ENCODE measurements at regions of chr21 and their contacts with region 1.

Region 1: DNA sequence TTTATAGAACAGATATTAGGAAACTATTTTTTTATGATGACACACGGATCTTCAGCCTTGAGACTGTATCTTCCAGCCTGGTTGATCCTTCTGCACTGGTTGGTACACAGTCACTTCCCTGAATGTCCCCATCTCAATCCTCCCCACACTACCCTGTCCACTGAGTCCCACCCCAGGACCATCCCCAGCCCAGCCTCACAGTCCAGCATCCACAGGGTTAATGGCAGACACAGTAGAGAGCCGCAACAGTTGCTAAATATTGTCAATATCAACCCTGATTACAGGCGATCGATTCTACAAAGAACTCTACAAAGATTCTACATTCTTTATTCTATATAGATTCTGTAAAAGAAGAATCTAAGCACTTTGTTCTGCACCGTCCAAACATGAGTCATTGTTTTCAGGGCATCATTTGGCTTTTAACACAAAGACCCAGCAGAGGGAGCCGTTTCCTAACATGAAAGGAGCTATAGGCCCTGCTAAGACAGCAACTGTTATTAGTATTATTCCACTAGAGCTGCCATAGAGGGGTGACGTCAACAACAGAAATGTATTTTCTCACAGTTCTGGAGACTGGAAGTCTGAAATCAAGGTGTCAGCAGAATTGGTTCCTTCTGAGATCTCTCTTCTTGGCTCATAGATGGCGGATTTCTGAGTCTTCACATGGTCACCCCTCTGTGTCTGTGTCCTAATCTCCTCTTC is 30.1 kb upstream of the IFNAR2 start:
- DNase-seq: peak; percentile 73
- ATAC-seq: peak; percentile 76
- H3K4me3 ChIP-seq: no peak overlapping the region
- H3K27ac ChIP-seq: no peak overlapping the region
- H3K4me1 ChIP-seq: peaks cover 14% of the 10 kb centered on the region
- H3K27me3 ChIP-seq: no peaks in the 10 kb centered on the region; a peak in 1 of 4 replicates
- CTCF ChIP-seq: peak; percentile 74 to 90 (median 75)
- EP300 ChIP-seq: no peak
- POLR2A ChIP-seq: no peak
- RAD21 ChIP-seq: peak; percentile 96

Region 2: DNA sequence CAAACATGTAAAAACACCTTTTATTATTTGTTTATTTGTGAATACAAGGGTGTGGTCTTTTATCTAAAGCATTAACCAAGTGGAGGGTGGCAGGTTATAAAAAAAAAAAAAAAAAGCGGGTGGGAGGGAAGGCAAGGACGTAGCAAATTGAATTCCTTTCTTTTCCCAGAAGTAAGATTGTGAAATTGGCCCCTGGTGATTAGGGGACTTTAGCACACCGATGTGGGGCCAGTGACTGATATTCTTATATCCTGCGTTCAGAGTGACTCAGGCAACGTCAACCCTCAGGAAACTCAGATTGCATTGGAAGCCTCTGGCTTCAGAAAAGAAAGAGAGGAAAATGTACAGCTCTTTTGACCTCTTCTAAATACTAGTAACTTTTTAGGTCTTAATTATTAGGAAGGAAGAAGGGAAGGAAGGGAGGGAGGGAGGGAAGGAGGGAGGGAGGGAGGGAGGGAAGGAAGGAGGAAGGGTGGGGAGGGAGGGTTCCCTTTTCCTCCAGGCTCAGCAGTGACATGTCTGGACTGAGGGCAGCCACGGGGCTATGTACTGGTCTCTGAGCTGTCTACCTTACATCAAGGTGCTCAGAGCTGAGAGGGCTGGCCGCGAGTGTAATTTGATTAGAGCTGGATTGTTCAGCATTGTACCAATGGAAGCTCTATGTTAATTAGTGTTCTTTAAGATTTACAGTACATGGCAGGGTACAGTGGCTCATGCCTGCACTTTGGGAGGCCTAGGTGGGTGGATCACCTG is 756.9 kb before region 1 on chr21:
- CTCF ChIA-PET with region 1: no interaction called
- POLR2A ChIA-PET with region 1: no interaction called
- RAD21 ChIA-PET with region 1: no interaction called
- SMC1A ChIA-PET with region 1: no interaction called
- in situ Hi-C with region 1: no loop called
- intact Hi-C with region 1: no loop called
- DNase-seq: no peak
- ATAC-seq: no peak
- H3K4me3 ChIP-seq: no peak overlapping the region
- H3K27ac ChIP-seq: no peak overlapping the region
- H3K4me1 ChIP-seq: no peaks in the 10 kb centered on the region
- H3K27me3 ChIP-seq: no peaks in the 10 kb centered on the region; a peak in 1 of 4 replicates
- CTCF ChIP-seq: no peak
- EP300 ChIP-seq: no peak
- POLR2A ChIP-seq: no peak
- RAD21 ChIP-seq: no peak

Region 3: GRCh38 chr21:32940079-32941014 is 259.3 kb before region 1 on chr21:
- CTCF ChIA-PET with region 1: interaction called, 43 read pairs
- POLR2A ChIA-PET with region 1: no interaction called
- RAD21 ChIA-PET with region 1: interaction called, 15 read pairs
- SMC1A ChIA-PET with region 1: interaction called, 21 read pairs
- in situ Hi-C with region 1: no loop called
- intact Hi-C with region 1: loop called (anchors 2 kb)
- DNase-seq: no peak
- ATAC-seq: peak; percentile 76
- H3K4me3 ChIP-seq: no peak overlapping the region
- H3K27ac ChIP-seq: no peak overlapping the region
- H3K4me1 ChIP-seq: no peaks in the 10 kb centered on the region
- H3K27me3 ChIP-seq: no peaks in the 10 kb centered on the region
- CTCF ChIP-seq: peak; percentile 60 to 78 (median 67)
- EP300 ChIP-seq: no peak
- POLR2A ChIP-seq: no peak
- RAD21 ChIP-seq: peak; percentile 64

Region 4: GRCh38 chr21:33127154-33127893 is 72.3 kb before region 1 on chr21:
- CTCF ChIA-PET with region 1: interaction called, 24 read pairs
- POLR2A ChIA-PET with region 1: interaction called, 3 read pairs
- RAD21 ChIA-PET with region 1: interaction called, 5 read pairs
- SMC1A ChIA-PET with region 1: interaction called, 9 read pairs
- in situ Hi-C with region 1: no loop called
- intact Hi-C with region 1: loop called (anchors 5 kb)
- DNase-seq: peak; percentile 19
- ATAC-seq: peak; percentile 93
- H3K4me3 ChIP-seq: peak overlapping the region; percentile 38; the same call in 1 of the 2 replicates
- H3K27ac ChIP-seq: no peak overlapping the region
- H3K4me1 ChIP-seq: no peaks in the 10 kb centered on the region
- H3K27me3 ChIP-seq: peaks cover 2% of the 10 kb centered on the region in 2 experiments; a peak in 3 of 4 replicates
- CTCF ChIP-seq: peak; percentile 76 to 89 (median 82)
- EP300 ChIP-seq: no peak
- POLR2A ChIP-seq: no peak
- RAD21 ChIP-seq: peak; percentile 86

Region 5: GRCh38 chr21:33339918-33340317 is 140.3 kb after region 1 on chr21:
- CTCF ChIA-PET with region 1: interaction called, 21 read pairs
- POLR2A ChIA-PET with region 1: no interaction called
- RAD21 ChIA-PET with region 1: no interaction called
- SMC1A ChIA-PET with region 1: interaction called, 5 read pairs
- in situ Hi-C with region 1: no loop called
- intact Hi-C with region 1: no loop called
- DNase-seq: no peak
- ATAC-seq: peak; percentile 31; the same call in 2 of the 3 replicates
- H3K4me3 ChIP-seq: no peak overlapping the region
- H3K27ac ChIP-seq: peak overlapping the region; percentile 61
- H3K4me1 ChIP-seq: peaks cover 21% of the 10 kb centered on the region
- H3K27me3 ChIP-seq: no peaks in the 10 kb centered on the region
- CTCF ChIP-seq: no peak
- EP300 ChIP-seq: no peak
- POLR2A ChIP-seq: no peak
- RAD21 ChIP-seq: no peak

Region 6: DNA sequence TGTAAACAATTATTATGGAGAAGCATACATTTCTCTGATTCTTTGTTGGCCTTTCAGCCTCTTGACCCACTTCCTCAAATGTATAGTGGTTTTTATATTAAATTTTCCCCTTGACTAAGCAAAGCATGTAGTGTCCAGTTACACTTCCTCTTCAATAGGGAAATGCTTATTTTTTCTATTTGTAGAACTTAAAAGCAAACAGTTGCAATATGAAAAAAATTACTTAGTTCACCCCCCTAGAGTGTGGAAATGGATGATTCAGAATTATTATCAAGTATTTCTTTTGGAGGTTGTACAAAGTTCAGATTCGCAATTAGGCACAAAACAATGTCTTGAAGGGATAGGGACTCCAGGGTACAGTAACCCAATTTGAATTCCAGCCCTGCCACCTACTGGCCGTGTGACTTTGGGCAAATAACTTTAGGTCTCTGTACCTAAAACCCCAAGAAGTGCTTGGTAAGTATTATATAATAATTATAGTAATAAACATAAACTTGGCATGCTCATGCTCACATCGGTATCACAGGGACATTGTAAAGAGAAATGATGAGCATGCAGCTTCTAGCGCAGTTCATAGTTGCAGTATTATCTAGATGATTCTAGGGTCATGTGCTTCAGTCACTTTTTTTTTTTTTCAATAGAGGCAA is 174.9 kb after region 1 on chr21:
- CTCF ChIA-PET with region 1: interaction called, 25 read pairs
- POLR2A ChIA-PET with region 1: interaction called, 3 read pairs
- RAD21 ChIA-PET with region 1: interaction called, 12 read pairs
- SMC1A ChIA-PET with region 1: interaction called, 7 read pairs
- in situ Hi-C with region 1: no loop called
- intact Hi-C with region 1: loop called (anchors 1 kb)
- DNase-seq: no peak
- ATAC-seq: peak; percentile 87
- H3K4me3 ChIP-seq: no peak overlapping the region
- H3K27ac ChIP-seq: no peak overlapping the region
- H3K4me1 ChIP-seq: peaks cover 17% of the 10 kb centered on the region
- H3K27me3 ChIP-seq: no peaks in the 10 kb centered on the region
- CTCF ChIP-seq: peak; percentile 62 to 74 (median 63)
- EP300 ChIP-seq: peak in 1 of 2 experiments; percentile 27; a peak in 1 of 4 replicates
- POLR2A ChIP-seq: no peak
- RAD21 ChIP-seq: peak; percentile 77

Region 7: DNA sequence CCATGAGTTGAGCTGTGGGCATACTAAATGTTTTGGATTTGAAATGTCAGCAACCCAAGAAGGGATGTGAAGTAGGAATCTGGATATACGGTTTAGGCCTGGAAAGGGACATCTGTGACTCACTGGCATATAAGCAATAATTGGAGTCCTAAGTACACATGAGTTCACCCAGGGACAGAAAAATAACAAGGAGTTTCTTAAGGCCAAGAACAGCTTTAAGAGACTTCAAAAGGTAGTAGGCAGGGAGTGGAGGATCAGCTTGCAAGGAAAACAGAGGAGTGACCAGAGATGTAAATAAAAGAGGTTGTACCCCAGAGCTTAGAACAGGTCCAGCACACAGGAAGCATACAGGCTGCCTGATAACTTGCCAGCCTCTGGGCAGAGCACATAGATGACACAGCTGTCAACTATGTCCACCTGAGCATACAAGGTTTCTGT is 252.0 kb after region 1 on chr21:
- CTCF ChIA-PET with region 1: interaction called, 319 read pairs
- POLR2A ChIA-PET with region 1: no interaction called
- RAD21 ChIA-PET with region 1: interaction called, 37 read pairs
- SMC1A ChIA-PET with region 1: interaction called, 62 read pairs
- in situ Hi-C with region 1: no loop called
- intact Hi-C with region 1: no loop called
- DNase-seq: no peak
- ATAC-seq: no peak
- H3K4me3 ChIP-seq: no peak overlapping the region
- H3K27ac ChIP-seq: no peak overlapping the region
- H3K4me1 ChIP-seq: no peaks in the 10 kb centered on the region
- H3K27me3 ChIP-seq: no peaks in the 10 kb centered on the region
- CTCF ChIP-seq: no peak
- EP300 ChIP-seq: no peak
- POLR2A ChIP-seq: no peak
- RAD21 ChIP-seq: no peak

Region 8: DNA sequence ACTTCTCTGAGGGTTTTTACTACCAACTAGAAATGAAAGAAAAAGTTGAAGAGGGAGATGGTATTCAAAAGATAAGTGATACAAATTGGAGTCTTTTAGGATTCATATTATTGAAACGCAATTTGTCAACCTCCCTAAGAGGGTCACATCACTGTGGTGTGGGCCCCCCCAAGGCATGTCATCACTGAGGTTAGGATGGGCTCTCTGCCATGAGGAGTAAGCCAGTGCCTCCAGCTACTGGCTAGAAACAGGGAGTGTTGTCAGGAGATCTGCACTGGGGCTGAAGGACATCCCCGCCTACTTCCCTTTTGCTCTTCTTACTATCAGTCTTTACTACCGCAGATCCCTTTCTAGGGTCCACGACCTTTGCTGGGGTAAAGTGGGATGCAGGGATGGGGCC is 468.5 kb after region 1 on chr21:
- CTCF ChIA-PET with region 1: no interaction called
- POLR2A ChIA-PET with region 1: no interaction called
- RAD21 ChIA-PET with region 1: no interaction called
- SMC1A ChIA-PET with region 1: no interaction called
- in situ Hi-C with region 1: no loop called
- intact Hi-C with region 1: no loop called
- DNase-seq: no peak
- ATAC-seq: no peak
- H3K4me3 ChIP-seq: no peak overlapping the region
- H3K27ac ChIP-seq: no peak overlapping the region
- H3K4me1 ChIP-seq: no peaks in the 10 kb centered on the region
- H3K27me3 ChIP-seq: no peaks in the 10 kb centered on the region
- CTCF ChIP-seq: no peak
- EP300 ChIP-seq: no peak
- POLR2A ChIP-seq: no peak
- RAD21 ChIP-seq: no peak